ENCODE measurements at regions of chr6 and their contacts with region 1.

Region 1: DNA sequence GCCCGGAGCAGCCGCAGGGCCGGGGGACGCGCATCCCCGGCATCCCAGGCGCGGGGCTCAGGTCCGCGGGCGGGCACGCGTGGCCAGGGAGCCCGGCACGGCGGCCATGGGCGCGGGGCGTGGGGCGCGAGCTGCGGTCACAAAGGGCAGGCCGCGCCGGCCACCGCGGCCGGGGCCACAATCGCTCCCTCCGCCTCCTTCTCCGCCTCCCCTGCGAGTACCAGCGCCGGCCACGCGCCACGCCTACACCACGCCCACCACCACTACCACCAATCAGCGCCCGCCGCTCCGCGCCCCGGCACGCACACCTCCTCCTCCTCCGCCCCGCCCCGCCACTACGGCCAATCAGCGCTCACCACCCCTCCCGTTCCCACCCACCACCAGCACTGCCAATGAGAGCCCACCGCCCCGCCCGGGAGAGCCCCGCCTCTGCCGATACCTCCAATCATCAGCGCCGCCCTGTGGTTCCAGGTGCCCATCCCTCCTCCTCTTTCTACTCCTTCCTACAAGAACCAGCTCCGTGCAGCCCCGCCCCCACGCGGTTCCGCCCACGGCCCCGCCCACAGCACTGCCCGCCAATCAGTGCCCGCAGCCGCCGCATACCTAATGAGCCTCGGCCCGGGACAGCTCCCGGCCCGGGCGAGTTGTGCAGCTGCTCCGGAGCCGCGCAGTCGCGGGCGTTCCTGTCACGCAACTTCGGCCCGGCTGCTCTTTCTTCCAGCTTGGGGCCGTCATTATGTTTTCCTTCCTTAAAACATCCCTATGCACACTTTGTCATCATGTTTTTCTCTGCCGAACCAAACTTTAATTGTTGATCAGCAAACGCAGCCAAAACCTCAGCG is at the start of gene RPS6KA2:
- DNase-seq: peak; percentile 100
- H3K4me3 ChIP-seq: peak within 1 kb of the TSS; percentile 94
- H3K27ac ChIP-seq: peak within 1 kb of the TSS; percentile 64
- H3K4me1 ChIP-seq: peaks cover 24% of the 10 kb centered on the region
- H3K27me3 ChIP-seq: no peaks in the 10 kb centered on the region
- CTCF ChIP-seq: no peak
- total RNA-seq, gene RPS6KA2: 30.1 and 37.8 TPM in 2 replicates

Region 2: GRCh38 chr6:166275714-166276166 is 351.5 kb before region 1 on chr6:
- CTCF ChIA-PET with region 1: no interaction called
- POLR2A ChIA-PET with region 1: no interaction called
- intact Hi-C with region 1: loop called (anchors 10 kb)
- DNase-seq: peak; percentile 68
- H3K4me3 ChIP-seq: no peak overlapping the region
- H3K27ac ChIP-seq: no peak overlapping the region
- H3K4me1 ChIP-seq: no peaks in the 10 kb centered on the region
- H3K27me3 ChIP-seq: no peaks in the 10 kb centered on the region
- CTCF ChIP-seq: peak; percentile 99

Region 3: DNA sequence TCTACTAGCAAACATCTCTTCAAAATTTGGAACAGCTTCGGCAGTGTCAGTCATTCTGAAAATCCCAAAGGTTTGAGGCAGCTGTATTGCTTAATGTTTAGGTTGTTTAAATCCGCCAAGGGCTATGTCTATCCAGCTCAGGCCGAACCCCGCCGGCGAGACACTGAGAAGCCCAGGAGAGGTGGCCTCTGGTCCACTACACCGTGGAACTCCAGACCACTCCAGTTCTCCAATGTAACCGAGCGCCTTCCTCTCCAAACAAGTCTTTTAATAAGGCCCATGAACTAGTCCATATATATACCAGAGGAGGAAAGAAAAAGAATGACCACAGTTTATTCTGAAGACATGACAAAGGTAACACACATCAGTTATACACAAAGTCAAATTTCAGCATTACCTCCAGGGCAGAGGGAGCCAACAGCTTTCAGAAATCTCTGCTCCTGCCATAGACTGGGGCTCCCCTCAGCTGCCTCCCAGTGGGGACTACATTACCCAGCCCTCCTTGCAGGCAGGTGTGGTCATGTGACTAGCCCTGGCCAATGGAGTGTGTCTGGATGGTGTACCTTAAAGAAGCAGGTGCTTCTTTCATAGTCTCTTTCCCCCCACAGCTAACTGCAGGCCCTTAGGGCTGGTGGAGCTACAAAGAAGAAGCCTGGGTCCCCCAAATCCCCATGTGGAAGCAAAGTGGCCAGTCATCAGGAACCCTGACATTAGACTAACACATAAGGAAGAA is 40.7 kb before region 1 on chr6 and contains the start of gene RAMACL:
- CTCF ChIA-PET with region 1: no interaction called
- POLR2A ChIA-PET with region 1: no interaction called
- intact Hi-C with region 1: loop called (anchors 5 kb)
- DNase-seq: peak; percentile 24
- H3K4me3 ChIP-seq: no peak within 1 kb of the TSS
- H3K27ac ChIP-seq: no peak within 1 kb of the TSS
- H3K4me1 ChIP-seq: peaks cover 53% of the 10 kb centered on the region
- H3K27me3 ChIP-seq: no peaks in the 10 kb centered on the region
- CTCF ChIP-seq: no peak
- total RNA-seq, gene RAMACL: 0.77 and 2.2 TPM in 2 replicates

Region 4: GRCh38 chr6:166671434-166672081 is 44.3 kb after region 1 on chr6:
- CTCF ChIA-PET with region 1: no interaction called
- POLR2A ChIA-PET with region 1: no interaction called
- intact Hi-C with region 1: loop called (anchors 5 kb)
- DNase-seq: no peak
- H3K4me3 ChIP-seq: no peak overlapping the region
- H3K27ac ChIP-seq: no peak overlapping the region
- H3K4me1 ChIP-seq: peaks cover 35% of the 10 kb centered on the region
- H3K27me3 ChIP-seq: no peaks in the 10 kb centered on the region
- CTCF ChIP-seq: no peak

Region 5: GRCh38 chr6:166736634-166737033 is 109.4 kb after region 1 on chr6:
- CTCF ChIA-PET with region 1: no interaction called
- POLR2A ChIA-PET with region 1: no interaction called
- intact Hi-C with region 1: loop called (anchors 5 kb)
- DNase-seq: peak; percentile 85
- H3K4me3 ChIP-seq: no peak overlapping the region
- H3K27ac ChIP-seq: no peak overlapping the region
- H3K4me1 ChIP-seq: peaks cover 11% of the 10 kb centered on the region
- H3K27me3 ChIP-seq: no peaks in the 10 kb centered on the region
- CTCF ChIP-seq: no peak

Region 6: GRCh38 chr6:167258646-167259045 is 631.4 kb after region 1 on chr6:
- CTCF ChIA-PET with region 1: interaction called, 22 read pairs
- POLR2A ChIA-PET with region 1: no interaction called
- intact Hi-C with region 1: no loop called
- DNase-seq: no peak
- H3K4me3 ChIP-seq: no peak overlapping the region
- H3K27ac ChIP-seq: no peak overlapping the region
- H3K4me1 ChIP-seq: no peaks in the 10 kb centered on the region
- H3K27me3 ChIP-seq: no peaks in the 10 kb centered on the region
- CTCF ChIP-seq: no peak